A549 (cell line): ENCODE measurements at regions of chr12 and their contacts with region 1.

Region 1: DNA sequence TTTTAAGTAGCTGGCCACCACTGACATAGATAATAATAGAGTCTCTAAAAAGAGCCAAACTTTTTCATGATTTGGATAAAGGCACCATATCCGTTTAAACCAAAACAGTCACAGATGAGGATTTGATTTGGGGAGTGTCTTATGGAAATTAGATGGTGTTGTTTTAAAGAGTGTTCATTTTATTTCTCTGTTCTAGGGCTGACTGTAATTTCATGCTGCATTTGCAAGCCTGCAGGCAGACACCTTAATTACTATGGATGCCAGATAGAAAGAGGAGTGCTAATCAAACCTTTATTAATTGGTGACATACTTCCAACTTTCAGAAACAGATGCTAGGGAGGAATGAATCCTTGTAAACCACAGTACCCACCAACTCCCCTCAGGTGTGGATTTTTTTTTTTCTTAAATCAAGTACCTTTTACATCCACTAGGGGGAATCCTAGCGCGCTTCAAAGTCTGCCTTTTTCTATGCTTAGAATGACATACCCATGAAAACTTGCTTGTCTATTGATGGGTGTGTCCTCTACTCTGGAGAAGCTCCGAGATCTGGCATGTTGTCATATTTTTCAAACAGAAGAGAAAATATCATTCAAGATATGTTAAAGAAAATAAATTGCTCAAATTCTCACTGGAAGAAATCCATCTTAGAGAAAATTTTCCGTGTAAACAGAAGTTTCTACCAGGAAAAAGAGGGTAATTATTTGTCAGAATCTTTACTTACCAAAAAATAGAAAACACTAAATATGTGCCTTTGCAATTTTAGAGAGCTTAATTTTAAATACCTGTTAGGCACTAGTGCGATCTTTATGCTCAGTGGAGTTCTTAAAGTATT is 14.2 kb upstream of the PLXNC1 start:
- DNase-seq: peak; percentile 71 to 75
- ATAC-seq: peak; percentile 82 to 91
- H3K4me3 ChIP-seq: no peak overlapping the region
- H3K27ac ChIP-seq: no peak overlapping the region
- H3K4me1 ChIP-seq: no peaks in the 10 kb centered on the region
- CTCF ChIP-seq: peak; percentile 84
- EP300 ChIP-seq: no peak
- POLR2A ChIP-seq: no peak
- RAD21 ChIP-seq: peak; percentile 77 to 79

Region 2: DNA sequence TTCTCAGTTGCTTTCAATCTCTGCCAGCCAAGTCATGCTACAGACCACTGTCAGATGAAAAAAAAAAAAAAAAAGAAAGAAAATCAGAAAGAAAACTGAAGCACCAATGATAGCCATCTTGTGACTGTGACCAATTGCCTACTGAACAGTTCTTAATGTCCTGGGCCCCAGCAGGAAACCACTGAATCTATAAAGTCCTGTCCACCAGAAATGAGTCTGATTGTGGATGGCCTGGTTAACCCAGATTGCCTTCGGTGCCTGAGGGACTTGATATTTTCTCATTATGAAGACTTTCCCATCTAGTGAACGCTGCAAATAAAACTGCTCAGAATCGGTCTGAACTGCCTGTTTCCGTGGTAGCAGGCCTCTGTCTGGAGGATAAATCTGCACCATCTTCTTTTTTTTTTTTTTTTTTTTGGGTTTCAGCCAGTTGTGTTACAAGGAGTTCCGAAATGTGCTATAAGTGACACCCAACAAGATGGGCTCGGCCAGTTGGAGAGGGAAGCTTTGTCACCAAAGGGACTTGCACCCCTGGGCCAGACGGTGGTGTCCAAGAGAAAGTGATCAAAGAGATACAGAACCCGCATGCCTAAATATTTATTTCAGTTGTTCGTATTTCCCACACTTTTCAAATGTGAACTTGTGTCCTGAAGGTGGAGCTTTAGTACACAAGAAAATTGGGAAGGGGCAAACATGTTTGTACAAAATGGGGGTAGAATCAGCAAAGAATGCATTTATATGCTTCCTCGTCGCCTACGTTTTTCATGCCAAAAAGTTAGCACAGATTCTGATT is 11.2 kb after region 1 on chr12:
- CTCF ChIA-PET with region 1: interaction called, 28 read pairs
- POLR2A ChIA-PET with region 1: no interaction called
- DNase-seq: peak in 1 of 2 experiments; percentile 42
- ATAC-seq: no peak
- H3K4me3 ChIP-seq: no peak overlapping the region
- H3K27ac ChIP-seq: no peak overlapping the region
- H3K4me1 ChIP-seq: peaks cover 11% of the 10 kb centered on the region; the same call in 2 of the 3 replicates
- CTCF ChIP-seq: peak; percentile 45; the same call in 2 of the 3 replicates
- EP300 ChIP-seq: no peak
- POLR2A ChIP-seq: no peak
- RAD21 ChIP-seq: peak; percentile 39 to 57

Region 3: DNA sequence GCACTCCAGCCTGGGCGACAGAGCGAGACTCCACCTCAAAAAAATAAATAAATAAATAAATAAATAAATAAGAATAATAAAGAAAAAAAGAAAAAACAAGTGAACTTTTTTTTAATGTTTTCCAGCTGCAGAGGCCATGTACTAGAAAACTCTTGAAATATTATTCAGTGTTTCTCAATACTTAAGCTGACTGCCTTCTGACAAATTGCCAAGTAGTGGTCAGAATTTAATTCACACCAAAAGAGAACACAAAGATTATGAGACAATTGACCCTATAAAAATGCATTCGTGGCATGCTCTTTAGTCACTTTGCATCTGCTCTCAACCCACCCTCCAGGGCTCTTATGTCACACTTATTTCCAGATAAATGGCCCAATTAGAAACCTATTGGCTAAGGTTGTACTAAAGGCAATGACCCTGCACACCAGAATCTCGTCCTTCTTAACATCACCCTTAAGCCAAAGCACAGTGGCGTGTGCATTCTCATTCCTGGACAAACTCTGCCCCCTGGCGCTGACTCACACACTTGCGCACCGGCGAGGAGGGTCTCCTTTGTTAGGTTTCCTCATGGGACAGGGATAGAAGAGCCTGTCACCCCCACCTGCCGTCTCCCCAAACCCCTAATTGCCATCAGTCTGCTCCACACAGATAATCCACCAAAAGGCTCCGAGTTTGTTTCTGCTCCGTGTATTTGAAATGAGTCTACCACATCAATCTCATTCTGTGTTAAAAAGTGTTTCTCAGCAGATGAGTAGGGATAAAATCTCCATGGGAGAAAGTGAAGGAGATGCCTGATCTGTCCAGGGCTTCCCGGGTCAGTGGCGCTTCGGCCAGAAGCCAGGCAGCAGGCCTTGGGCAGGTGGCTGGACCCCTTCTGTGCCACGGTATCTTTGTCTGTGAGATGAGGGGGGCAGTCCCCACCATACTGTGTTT is 398.6 kb after region 1 on chr12:
- CTCF ChIA-PET with region 1: interaction called, 26 read pairs
- POLR2A ChIA-PET with region 1: no interaction called
- DNase-seq: peak; percentile 74 to 75
- ATAC-seq: peak; percentile 81 to 95
- H3K4me3 ChIP-seq: no peak overlapping the region
- H3K27ac ChIP-seq: no peak overlapping the region
- H3K4me1 ChIP-seq: 0 out of 3 replicates have a peak, but pooled peaks cover 3% of the 10 kb centered on the region
- CTCF ChIP-seq: peak; percentile 84
- EP300 ChIP-seq: no peak
- POLR2A ChIP-seq: no peak
- RAD21 ChIP-seq: peak; percentile 95 to 96